Sigmoid colon (tissue), 7 donors: ENCODE measurements at regions of chr20 and their contacts with region 1.

Region 1: GRCh38 chr20:52379723-52380336 is 188.3 kb upstream of the ZFP64 start:
- DNase-seq: no peak
- H3K4me3 ChIP-seq: no peak overlapping the region
- H3K27ac ChIP-seq: no peak overlapping the region
- H3K4me1 ChIP-seq: no peaks in the 10 kb centered on the region
- H3K27me3 ChIP-seq: no peaks in the 10 kb centered on the region
- CTCF ChIP-seq: peak; percentile 9 to 82 (median 63)
- EP300 ChIP-seq: no peak
- POLR2A ChIP-seq: no peak

Region 2: GRCh38 chr20:50680412-50680908 is 1699.4 kb before region 1 on chr20:
- intact Hi-C with region 1: no loop called
- DNase-seq: no peak
- H3K4me3 ChIP-seq: no peak overlapping the region
- H3K27ac ChIP-seq: peak overlapping the region in 2 of 4 donors; percentile 11 to 24
- H3K4me1 ChIP-seq: no peaks in the 10 kb centered on the region
- H3K27me3 ChIP-seq: no peaks in the 10 kb centered on the region
- CTCF ChIP-seq: no peak
- EP300 ChIP-seq: no peak
- POLR2A ChIP-seq: no peak

Region 3: GRCh38 chr20:52127309-52127708 is 252.5 kb before region 1 on chr20:
- intact Hi-C with region 1: loop called (anchors 10 kb)
- DNase-seq: no peak
- H3K4me3 ChIP-seq: no peak overlapping the region
- H3K27ac ChIP-seq: no peak overlapping the region
- H3K4me1 ChIP-seq: no peaks in the 10 kb centered on the region
- H3K27me3 ChIP-seq: no peaks in the 10 kb centered on the region
- CTCF ChIP-seq: no peak
- EP300 ChIP-seq: no peak
- POLR2A ChIP-seq: no peak

Region 4: DNA sequence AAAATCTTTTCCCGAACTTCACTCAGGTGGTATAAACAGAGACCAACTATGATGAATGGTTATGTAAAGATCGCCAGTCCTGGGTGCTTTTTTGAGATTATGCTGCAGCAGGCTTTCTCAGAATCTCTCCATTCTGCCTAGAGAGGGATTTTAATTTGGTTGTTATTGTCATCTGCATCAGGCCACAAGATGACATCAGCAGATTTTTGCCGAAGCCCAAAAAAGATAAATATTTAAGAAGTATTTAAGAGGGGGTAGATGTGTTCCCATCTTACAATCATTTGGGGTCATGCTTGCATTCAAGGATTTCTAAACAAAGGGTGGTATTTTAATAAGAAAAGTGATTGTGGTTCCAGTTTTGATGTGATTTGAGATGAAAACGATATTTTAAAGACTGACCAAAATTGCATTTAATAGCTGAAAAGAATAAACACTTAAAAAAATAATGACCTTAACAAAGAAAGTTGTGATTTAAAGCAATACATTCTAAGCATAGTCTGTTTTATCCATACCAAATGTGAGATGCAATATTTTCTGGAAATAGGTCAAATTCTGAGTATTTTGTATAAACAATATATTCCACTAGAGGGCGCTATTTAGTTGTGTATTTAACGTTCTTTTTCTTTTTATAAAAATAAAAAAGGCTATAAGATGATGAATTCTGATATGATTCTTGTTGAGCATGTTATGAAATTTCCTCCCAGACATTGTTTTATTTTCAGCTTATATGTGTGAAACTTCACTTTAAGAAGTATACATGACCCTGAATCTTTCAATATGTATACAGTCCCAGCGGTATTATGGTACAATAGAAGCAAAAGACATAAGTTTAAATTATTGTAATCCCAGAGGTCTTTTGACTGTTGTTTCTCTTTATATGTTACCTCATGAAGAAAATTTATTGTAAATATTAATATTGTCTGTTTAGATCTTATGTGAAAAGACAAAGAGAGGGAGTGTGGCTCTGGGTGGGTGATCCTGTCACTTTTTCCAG is 137.3 kb before region 1 on chr20:
- intact Hi-C with region 1: loop called (anchors 5 kb)
- DNase-seq: no peak
- H3K4me3 ChIP-seq: no peak overlapping the region
- H3K27ac ChIP-seq: no peak overlapping the region
- H3K4me1 ChIP-seq: no peaks in the 10 kb centered on the region
- H3K27me3 ChIP-seq: no peaks in the 10 kb centered on the region
- CTCF ChIP-seq: peak in 3 of 4 experiments; percentile 18 to 66 (median 41)
- EP300 ChIP-seq: no peak
- POLR2A ChIP-seq: no peak